ENCODE measurements at regions of chr1 and their contacts with region 1.

Region 1: DNA sequence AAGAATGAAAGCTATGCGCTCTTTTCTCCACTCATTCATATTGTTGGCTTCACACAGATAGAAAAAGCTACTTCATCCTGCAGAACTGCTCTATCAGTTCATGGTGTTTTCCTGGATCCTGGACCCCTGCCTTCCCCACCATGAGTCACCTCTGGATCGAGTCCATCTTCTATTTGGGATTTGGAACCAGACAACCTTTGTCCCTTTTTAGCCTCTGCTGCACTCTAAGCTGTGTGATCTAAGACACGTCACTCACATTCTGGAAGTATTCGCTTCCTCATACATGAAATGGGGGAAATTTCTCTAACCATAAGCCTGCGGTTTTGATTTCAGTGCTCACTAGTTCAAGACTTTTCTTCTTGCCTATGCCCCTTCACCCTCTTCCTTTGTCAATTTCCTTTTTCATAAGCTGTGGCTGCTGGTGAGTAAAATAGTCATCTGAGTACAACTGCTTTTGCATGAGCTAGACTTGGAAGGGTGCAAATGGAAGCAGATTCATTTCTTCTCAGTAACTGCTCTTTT is 14.1 kb upstream of the DEGS1 start:
- DNase-seq: peak; percentile 38
- ATAC-seq: peak; percentile 88
- H3K4me3 Mint-ChIP-seq: peak overlapping the region; percentile 43
- H3K27ac Mint-ChIP-seq: peak overlapping the region; percentile 70
- H3K4me1 Mint-ChIP-seq: peaks cover 33% of the 10 kb centered on the region
- H3K27me3 Mint-ChIP-seq: no peaks in the 10 kb centered on the region
- CTCF ChIP-seq: no peak

Region 2: DNA sequence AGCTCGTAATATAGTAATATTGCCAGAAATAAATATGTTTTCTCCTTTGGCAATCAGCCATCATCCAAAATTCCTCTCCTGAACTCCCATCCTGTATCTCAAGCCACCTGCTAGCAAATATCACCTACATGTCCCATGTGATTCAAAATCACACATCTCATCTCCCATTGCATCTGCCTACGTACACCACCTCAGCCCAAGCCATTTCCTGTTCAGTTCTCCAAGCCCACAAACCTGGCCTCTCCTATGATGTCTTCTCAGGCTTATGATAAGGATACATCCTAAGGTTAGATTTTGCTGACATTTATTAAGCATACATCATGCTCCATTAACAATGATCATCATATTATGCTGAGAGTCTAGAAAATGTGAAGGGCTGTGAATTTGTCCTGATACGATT is 17.8 kb before region 1 on chr1:
- CTCF ChIA-PET with region 1: interaction called, 22 read pairs
- POLR2A ChIA-PET with region 1: interaction called, 3 read pairs
- intact Hi-C with region 1: no loop called
- DNase-seq: no peak
- ATAC-seq: no peak
- H3K4me3 Mint-ChIP-seq: no peak overlapping the region
- H3K27ac Mint-ChIP-seq: peak overlapping the region; percentile 2
- H3K4me1 Mint-ChIP-seq: peaks cover 7% of the 10 kb centered on the region
- H3K27me3 Mint-ChIP-seq: no peaks in the 10 kb centered on the region
- CTCF ChIP-seq: no peak

Region 3: GRCh38 chr1:224182866-224183590 is 14.1 kb after region 1 on chr1 and contains the start of gene DEGS1:
- CTCF ChIA-PET with region 1: interaction called, 12 read pairs
- POLR2A ChIA-PET with region 1: interaction called, 39 read pairs
- intact Hi-C with region 1: no loop called
- DNase-seq: peak; percentile 85
- ATAC-seq: peak; percentile 73
- H3K4me3 Mint-ChIP-seq: peak within 1 kb of the TSS; percentile 94
- H3K27ac Mint-ChIP-seq: peak within 1 kb of the TSS; percentile 89
- H3K4me1 Mint-ChIP-seq: peaks cover 41% of the 10 kb centered on the region
- H3K27me3 Mint-ChIP-seq: no peaks in the 10 kb centered on the region
- CTCF ChIP-seq: no peak
- total RNA-seq, gene DEGS1: 32.3 to 33.8 TPM